Aorta (tissue), 5 donors: ENCODE measurements at regions of chr17 and their contacts with region 1.

Region 1: GRCh38 chr17:18038861-18039534 is at the starts of genes ATPAF2 and GID4:
- DNase-seq: peak; percentile 100
- ATAC-seq: peak; percentile 100
- H3K4me3 ChIP-seq: peak within 1 kb of the TSS; percentile 54 to 83
- H3K27ac ChIP-seq: peak within 1 kb of the TSS in 1 of 2 donors; percentile 49
- H3K4me1 ChIP-seq: no peaks in the 10 kb centered on the region
- H3K27me3 ChIP-seq: no peaks in the 10 kb centered on the region
- total RNA-seq, gene ATPAF2: 16.3 to 19.9 TPM
- total RNA-seq, gene GID4: 11.4 to 14.1 TPM

Region 2: GRCh38 chr17:17774009-17774881 is 264.8 kb before region 1 on chr17:
- intact Hi-C with region 1: loop called in 1 of 2 experiments (anchors 10 kb)
- DNase-seq: peak in 1 of 2 donors; percentile 62
- ATAC-seq: no peak
- H3K4me3 ChIP-seq: no peak overlapping the region
- H3K27ac ChIP-seq: peak overlapping the region in 1 of 2 donors; percentile 28
- H3K4me1 ChIP-seq: no peaks in the 10 kb centered on the region
- H3K27me3 ChIP-seq: no peaks in the 10 kb centered on the region

Region 3: GRCh38 chr17:17812211-17813057 is 226.6 kb before region 1 on chr17:
- intact Hi-C with region 1: loop called in 1 of 2 experiments (anchors 10 kb)
- DNase-seq: peak; percentile 80 to 93
- ATAC-seq: peak; percentile 76
- H3K4me3 ChIP-seq: no peak overlapping the region
- H3K27ac ChIP-seq: no peak overlapping the region
- H3K4me1 ChIP-seq: no peaks in the 10 kb centered on the region
- H3K27me3 ChIP-seq: no peaks in the 10 kb centered on the region

Region 4: GRCh38 chr17:17972126-17972951 is 66.7 kb before region 1 on chr17 and contains the starts of genes DRC3 and TOM1L2:
- intact Hi-C with region 1: loop called in 1 of 2 experiments (anchors 1 kb)
- DNase-seq: peak; percentile 100
- ATAC-seq: peak; percentile 99
- H3K4me3 ChIP-seq: peak within 1 kb of the TSS; percentile 74 to 75
- H3K27ac ChIP-seq: peak within 1 kb of the TSS in 1 of 2 donors; percentile 88
- H3K4me1 ChIP-seq: no peaks in the 10 kb centered on the region
- H3K27me3 ChIP-seq: no peaks in the 10 kb centered on the region
- total RNA-seq, gene DRC3: 2.0 to 2.8 TPM
- total RNA-seq, gene TOM1L2: 70.4 to 74.9 TPM

Region 5: DNA sequence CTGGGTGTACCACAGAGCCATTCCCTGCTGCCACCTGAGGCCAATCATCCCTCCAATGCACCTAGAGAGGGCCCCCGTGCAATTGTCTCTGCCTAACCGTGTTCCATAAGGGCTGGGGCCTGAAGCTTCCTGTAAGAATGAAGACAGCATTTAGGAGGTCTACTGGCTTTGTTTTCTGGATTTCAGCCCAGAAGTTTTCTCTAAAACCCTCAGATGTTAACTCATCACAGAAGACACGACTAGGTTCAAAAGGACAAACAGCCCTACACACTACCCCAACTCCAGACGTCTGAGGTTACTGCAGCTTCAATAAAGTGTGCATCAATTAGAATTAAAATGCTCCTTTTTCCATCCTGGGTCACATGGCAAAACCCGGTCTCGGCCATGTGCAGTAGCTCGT is 37.9 kb after region 1 on chr17:
- intact Hi-C with region 1: no loop called
- DNase-seq: no peak
- ATAC-seq: no peak
- H3K4me3 ChIP-seq: no peak overlapping the region
- H3K27ac ChIP-seq: no peak overlapping the region
- H3K4me1 ChIP-seq: no peaks in the 10 kb centered on the region
- H3K27me3 ChIP-seq: no peaks in the 10 kb centered on the region